ENCODE measurements at regions of chr12 and their contacts with region 1.

Region 1: GRCh38 chr12:127381048-127381668 is 885.8 kb upstream of the TMEM132C start:
- DNase-seq: peak; percentile 84
- H3K4me3 Mint-ChIP-seq: no peak overlapping the region
- H3K27ac Mint-ChIP-seq: no peak overlapping the region
- H3K4me1 Mint-ChIP-seq: no peaks in the 10 kb centered on the region
- H3K27me3 Mint-ChIP-seq: peaks cover 6% of the 10 kb centered on the region

Region 2: DNA sequence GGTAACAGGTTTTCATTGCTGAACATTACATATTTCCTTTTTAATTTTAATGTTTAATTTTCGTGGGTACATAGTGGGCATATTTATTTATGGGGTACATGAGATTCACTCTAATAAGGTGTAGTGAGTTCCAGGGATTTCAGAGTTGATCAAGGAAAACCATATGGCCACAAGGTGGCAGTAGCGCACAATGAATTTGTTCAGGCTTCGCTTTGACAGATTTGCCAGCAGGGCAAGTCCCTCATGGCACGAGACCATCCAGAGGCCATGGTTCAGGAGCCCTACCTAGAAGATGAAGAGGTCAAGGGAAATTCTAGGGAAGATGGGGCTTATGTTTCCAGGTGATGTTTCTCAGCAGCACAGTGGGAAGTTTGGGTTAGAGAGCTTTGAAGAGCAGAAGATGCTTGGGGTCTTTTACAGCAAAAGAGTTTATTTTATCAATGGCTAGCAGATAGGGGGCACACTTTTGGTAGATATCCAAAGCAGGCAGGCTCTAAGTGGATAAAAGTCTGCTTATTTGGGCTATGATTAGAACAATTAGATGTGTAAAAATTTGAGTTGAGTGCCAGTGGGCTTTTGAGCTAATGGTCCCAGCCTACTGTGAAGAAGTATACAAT is 1311.5 kb before region 1 on chr12:
- intact Hi-C with region 1: loop called (anchors 5 kb)
- DNase-seq: peak; percentile 84
- H3K4me3 Mint-ChIP-seq: no peak overlapping the region
- H3K27ac Mint-ChIP-seq: no peak overlapping the region
- H3K4me1 Mint-ChIP-seq: no peaks in the 10 kb centered on the region
- H3K27me3 Mint-ChIP-seq: no peaks in the 10 kb centered on the region

Region 3: DNA sequence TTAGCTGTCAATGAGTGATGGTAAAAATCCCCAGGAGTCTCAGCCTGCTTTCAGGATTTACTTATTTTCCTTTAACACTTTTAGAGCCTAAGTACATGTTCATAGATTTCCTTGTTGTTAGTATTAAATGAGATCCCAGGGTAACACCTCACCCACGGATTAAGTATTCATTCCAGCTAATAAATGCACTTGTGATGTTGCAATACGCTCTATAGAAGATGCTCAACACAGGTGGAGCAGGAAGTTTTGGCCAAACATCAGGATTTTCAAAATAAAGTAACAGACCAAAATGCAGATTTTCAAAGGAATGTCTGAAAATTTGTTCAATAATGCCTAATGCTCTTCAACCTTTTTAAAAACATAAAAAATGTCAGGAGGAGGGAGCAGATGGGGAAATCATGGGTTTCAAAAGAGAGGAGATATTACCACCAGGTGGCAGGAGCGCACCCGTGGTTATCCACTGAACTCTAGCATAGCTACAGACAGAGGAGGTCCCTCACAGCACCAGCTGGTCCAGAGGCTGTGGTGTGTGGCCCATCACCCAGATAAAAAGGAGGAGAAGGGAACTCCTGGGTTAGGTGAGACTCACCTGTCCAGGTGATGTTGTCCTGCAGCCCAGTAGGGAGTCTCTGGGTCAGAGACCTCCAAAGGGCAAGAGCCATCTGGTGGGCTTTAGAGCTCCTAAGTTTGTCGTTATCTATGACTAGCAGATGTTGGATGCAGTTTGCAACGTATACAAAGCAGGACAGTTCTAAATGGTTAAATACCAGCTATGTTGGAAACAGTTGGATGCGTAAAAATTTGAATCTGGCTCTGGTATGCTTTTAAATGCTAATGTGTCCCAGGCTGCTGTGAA is 272.6 kb before region 1 on chr12:
- intact Hi-C with region 1: loop called (anchors 1 kb)
- DNase-seq: peak; percentile 82
- H3K4me3 Mint-ChIP-seq: no peak overlapping the region
- H3K27ac Mint-ChIP-seq: no peak overlapping the region
- H3K4me1 Mint-ChIP-seq: no peaks in the 10 kb centered on the region
- H3K27me3 Mint-ChIP-seq: peaks cover 6% of the 10 kb centered on the region

Region 4: DNA sequence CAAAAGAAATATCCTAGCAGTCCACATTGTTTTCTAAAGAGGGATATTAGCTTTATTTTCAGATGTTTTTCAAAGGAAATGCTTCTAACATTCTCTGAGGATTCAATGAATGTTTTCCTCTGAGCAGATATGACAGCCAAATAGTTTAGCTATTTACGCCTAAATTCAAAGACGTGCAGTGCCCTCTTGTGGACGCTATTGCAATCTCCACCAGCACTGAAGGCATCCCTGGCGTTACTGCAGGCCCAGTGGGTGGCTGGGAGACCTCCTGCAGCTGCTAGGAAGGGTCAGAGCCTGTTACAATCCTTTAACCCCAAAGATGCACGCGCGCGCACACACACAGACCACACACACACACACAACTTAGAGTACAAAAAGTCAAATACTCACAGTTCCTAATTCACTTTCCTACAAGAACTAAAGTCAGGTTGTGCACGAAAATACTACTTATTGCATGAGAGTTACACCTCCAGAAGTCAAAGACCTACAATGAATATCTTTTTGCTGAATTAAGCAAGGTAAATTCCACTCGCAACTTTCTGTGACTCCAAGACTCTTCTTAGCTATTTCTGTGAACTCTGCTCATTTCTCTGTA is 296.5 kb after region 1 on chr12:
- intact Hi-C with region 1: loop called (anchors 5 kb)
- DNase-seq: peak; percentile 87
- H3K4me3 Mint-ChIP-seq: no peak overlapping the region
- H3K27ac Mint-ChIP-seq: no peak overlapping the region
- H3K4me1 Mint-ChIP-seq: no peaks in the 10 kb centered on the region
- H3K27me3 Mint-ChIP-seq: no peaks in the 10 kb centered on the region